ENCODE measurements at regions of chrX and their contacts with region 1.

Region 1: GRCh38 chrX:130060122-130061069 is 49.9 kb downstream of the ELF4 start:
- DNase-seq: peak; percentile 88
- ATAC-seq: peak; percentile 96

Region 2: GRCh38 chrX:129925305-129926092 is 134.9 kb before region 1 on chrX:
- intact Hi-C with region 1: loop called (anchors 5 kb)
- DNase-seq: peak; percentile 53
- ATAC-seq: peak; percentile 96

Region 3: DNA sequence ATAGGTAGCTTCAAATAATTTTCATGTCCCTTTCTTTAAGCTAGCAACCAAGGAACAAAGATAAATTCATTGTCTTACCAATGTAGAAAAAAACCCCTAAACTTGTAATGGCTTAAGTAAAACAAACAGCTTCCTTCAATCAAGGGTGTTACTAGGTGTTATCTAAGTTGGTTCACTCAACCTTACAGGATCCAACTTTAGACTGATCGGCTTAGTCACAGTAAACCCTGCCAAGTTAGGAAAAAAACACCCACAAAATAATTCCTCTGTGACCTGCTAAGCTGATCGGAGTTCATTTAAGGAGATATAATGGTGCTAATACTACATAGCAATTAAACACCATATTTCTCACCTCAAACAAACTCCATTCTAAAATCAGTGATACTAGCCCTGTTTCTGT is 95.2 kb after region 1 on chrX:
- intact Hi-C with region 1: no loop called
- DNase-seq: no peak
- ATAC-seq: peak; percentile 36

Measured in Right ventricle myocardium superior (tissue), 1 donor.